Activated CD8-positive, alpha-beta T cell treated with anti-CD3 and anti-CD28 coated beads for 36 hours (primary cell): ENCODE measurements at regions of chr5 and their contacts with region 1.

Region 1: DNA sequence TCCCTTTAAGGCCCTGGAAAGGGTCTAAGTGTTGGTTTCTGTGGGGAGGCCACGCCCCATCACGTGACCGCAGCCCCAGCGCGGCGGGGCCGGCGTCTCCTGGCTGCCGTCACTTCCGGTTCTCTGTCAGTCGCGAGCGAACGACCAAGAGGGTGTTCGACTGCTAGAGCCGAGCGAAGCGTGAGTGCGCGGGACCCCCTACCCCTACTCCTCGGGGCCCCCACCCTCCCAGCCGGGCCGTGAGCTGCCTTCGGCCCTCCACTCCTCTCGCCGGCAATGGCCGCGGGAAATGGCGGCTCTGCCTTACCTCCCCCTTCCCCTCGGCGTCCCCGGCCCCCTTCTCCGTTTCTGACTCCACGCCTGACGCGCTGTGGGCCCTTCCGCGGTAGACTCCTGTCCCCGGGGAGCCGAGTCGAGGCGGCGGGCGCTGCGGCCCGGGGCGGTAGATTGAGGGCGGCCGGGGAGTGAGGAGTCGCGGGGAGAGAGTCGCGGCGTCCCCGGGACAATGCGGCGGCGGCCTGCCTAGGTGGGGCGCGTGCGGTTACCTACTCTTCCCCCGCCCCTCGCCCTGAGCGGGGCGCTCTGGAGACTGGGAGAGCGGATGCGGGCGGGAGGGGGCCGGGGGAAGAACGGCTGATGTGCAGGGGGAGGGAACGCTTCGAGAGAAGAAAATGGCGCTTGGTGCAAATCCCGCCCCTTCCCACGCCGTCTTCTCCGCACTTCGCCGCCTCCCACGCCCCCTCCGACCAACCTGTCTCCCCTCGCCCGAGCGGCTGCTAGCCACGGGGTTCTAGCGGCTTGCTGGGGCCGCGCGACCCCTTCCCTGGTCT is at the start of gene SUB1:
- DNase-seq: peak; percentile 96
- ATAC-seq: peak; percentile 89
- H3K4me3 Mint-ChIP-seq: peak within 1 kb of the TSS; percentile 97
- H3K27ac Mint-ChIP-seq: peak within 1 kb of the TSS; percentile 99
- H3K4me1 Mint-ChIP-seq: peaks cover 52% of the 10 kb centered on the region
- H3K27me3 Mint-ChIP-seq: peaks cover 1% of the 10 kb centered on the region
- CTCF ChIP-seq: no peak
- total RNA-seq, gene SUB1: 403 to 431 TPM

Region 2: GRCh38 chr5:32312647-32313523 is 272.8 kb before region 1 on chr5 and contains the start of gene MTMR12:
- CTCF ChIA-PET with region 1: no interaction called
- POLR2A ChIA-PET with region 1: no interaction called
- intact Hi-C with region 1: loop called (anchors 10 kb)
- DNase-seq: peak; percentile 100
- ATAC-seq: peak; percentile 95
- H3K4me3 Mint-ChIP-seq: peak within 1 kb of the TSS; percentile 92
- H3K27ac Mint-ChIP-seq: peak within 1 kb of the TSS; percentile 92
- H3K4me1 Mint-ChIP-seq: peaks cover 34% of the 10 kb centered on the region
- H3K27me3 Mint-ChIP-seq: no peaks in the 10 kb centered on the region
- CTCF ChIP-seq: no peak
- total RNA-seq, gene MTMR12: 19.7 to 19.9 TPM

Region 3: DNA sequence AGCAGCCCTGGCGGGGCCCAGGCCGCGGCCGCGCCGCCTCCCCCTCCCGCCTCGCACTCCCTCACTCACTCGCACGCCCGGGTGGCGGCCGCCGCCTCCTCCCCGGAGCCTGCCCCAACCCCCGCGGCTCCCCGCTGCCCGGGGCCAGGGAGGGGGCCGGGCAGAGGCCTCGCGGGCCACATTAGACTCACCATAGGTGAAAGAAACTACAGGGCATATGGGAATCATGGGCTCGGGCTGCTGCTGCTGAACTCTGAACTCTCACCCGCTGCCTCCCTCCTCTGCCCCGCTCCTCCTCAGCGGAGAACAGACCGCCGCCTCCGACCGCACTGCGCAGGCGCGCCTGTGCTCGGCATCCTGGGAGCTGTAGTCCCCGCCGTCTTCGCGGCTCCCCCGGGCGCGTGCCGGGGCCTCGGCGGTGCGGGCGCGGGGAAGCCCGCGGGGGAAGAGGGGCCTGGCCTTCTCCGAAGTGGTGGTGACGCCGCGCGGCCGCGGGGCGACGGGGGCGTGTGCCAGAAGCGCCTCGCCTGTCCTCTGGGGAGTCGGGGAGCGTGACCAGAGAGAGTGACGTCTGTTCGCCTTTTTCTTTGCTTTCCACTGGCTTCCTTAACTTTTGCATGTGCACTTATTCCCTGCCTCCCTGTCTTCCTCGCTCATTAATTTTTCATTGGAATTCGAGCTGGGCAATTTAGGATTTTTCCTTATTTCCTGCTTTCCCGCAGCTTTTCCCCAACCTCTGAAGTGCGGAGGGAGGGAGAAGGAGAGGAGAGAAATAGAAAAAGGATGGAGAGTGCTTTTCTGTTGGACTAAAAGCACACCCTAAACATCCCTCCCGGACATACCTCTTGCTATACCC is 141.0 kb before region 1 on chr5 and contains the start of gene ZFR:
- CTCF ChIA-PET with region 1: interaction called, 9 read pairs
- POLR2A ChIA-PET with region 1: interaction called, 5 read pairs
- intact Hi-C with region 1: loop called (anchors 5 kb)
- DNase-seq: peak; percentile 93
- ATAC-seq: peak; percentile 90
- H3K4me3 Mint-ChIP-seq: peak within 1 kb of the TSS; percentile 89
- H3K27ac Mint-ChIP-seq: peak within 1 kb of the TSS; percentile 97
- H3K4me1 Mint-ChIP-seq: peaks cover 35% of the 10 kb centered on the region
- H3K27me3 Mint-ChIP-seq: peaks cover 4% of the 10 kb centered on the region
- CTCF ChIP-seq: no peak
- total RNA-seq, gene ZFR: 56.8 to 59.2 TPM

Region 4: GRCh38 chr5:32489791-32490582 is 95.7 kb before region 1 on chr5:
- CTCF ChIA-PET with region 1: interaction called, 182 read pairs
- POLR2A ChIA-PET with region 1: interaction called, 6 read pairs
- intact Hi-C with region 1: loop called (anchors 1 kb)
- DNase-seq: peak; percentile 76
- ATAC-seq: peak; percentile 76
- H3K4me3 Mint-ChIP-seq: no peak overlapping the region
- H3K27ac Mint-ChIP-seq: no peak overlapping the region
- H3K4me1 Mint-ChIP-seq: no peaks in the 10 kb centered on the region
- H3K27me3 Mint-ChIP-seq: no peaks in the 10 kb centered on the region
- CTCF ChIP-seq: peak; percentile 93

Region 5: GRCh38 chr5:32504989-32505596 is 80.6 kb before region 1 on chr5:
- CTCF ChIA-PET with region 1: interaction called, 35 read pairs
- POLR2A ChIA-PET with region 1: interaction called, 3 read pairs
- intact Hi-C with region 1: no loop called
- DNase-seq: no peak
- ATAC-seq: no peak
- H3K4me3 Mint-ChIP-seq: no peak overlapping the region
- H3K27ac Mint-ChIP-seq: no peak overlapping the region
- H3K4me1 Mint-ChIP-seq: peaks cover 8% of the 10 kb centered on the region
- H3K27me3 Mint-ChIP-seq: peaks cover 8% of the 10 kb centered on the region
- CTCF ChIP-seq: no peak

Region 6: GRCh38 chr5:32542216-32543059 is 43.2 kb before region 1 on chr5:
- CTCF ChIA-PET with region 1: interaction called, 16 read pairs
- POLR2A ChIA-PET with region 1: no interaction called
- intact Hi-C with region 1: no loop called
- DNase-seq: peak; percentile 48
- ATAC-seq: peak; percentile 77
- H3K4me3 Mint-ChIP-seq: no peak overlapping the region
- H3K27ac Mint-ChIP-seq: peak overlapping the region; percentile 89
- H3K4me1 Mint-ChIP-seq: peaks cover 25% of the 10 kb centered on the region
- H3K27me3 Mint-ChIP-seq: no peaks in the 10 kb centered on the region
- CTCF ChIP-seq: no peak

Region 7: GRCh38 chr5:32613050-32613672 is 27.5 kb after region 1 on chr5:
- CTCF ChIA-PET with region 1: interaction called, 14 read pairs
- POLR2A ChIA-PET with region 1: interaction called, 3 read pairs
- intact Hi-C with region 1: no loop called
- DNase-seq: peak; percentile 92
- ATAC-seq: peak; percentile 95
- H3K4me3 Mint-ChIP-seq: no peak overlapping the region
- H3K27ac Mint-ChIP-seq: peak overlapping the region; percentile 18
- H3K4me1 Mint-ChIP-seq: peaks cover 2% of the 10 kb centered on the region
- H3K27me3 Mint-ChIP-seq: no peaks in the 10 kb centered on the region
- CTCF ChIP-seq: peak; percentile 96